ENCODE measurements at regions of chr9 and their contacts with region 1.

Region 1: GRCh38 chr9:101533334-101534107 is at the start of gene RNF20:
- DNase-seq: peak; percentile 96 to 98
- H3K4me3 ChIP-seq: peak within 1 kb of the TSS; percentile 63
- H3K27ac ChIP-seq: peak within 1 kb of the TSS; percentile 65
- H3K4me1 ChIP-seq: peaks cover 9% of the 10 kb centered on the region
- H3K27me3 ChIP-seq: no peaks in the 10 kb centered on the region
- CTCF ChIP-seq: no peak
- total RNA-seq, gene RNF20: 55.8 and 58.7 TPM in 2 replicates

Region 2: GRCh38 chr9:101449140-101449721 is 84.3 kb before region 1 on chr9:
- CTCF ChIA-PET with region 1: interaction called, 5 read pairs
- POLR2A ChIA-PET with region 1: interaction called, 6 read pairs
- intact Hi-C with region 1: loop called (anchors 2 kb)
- DNase-seq: peak; percentile 66 to 67
- H3K4me3 ChIP-seq: peak overlapping the region; percentile 64
- H3K27ac ChIP-seq: no peak overlapping the region
- H3K4me1 ChIP-seq: no peaks in the 10 kb centered on the region
- H3K27me3 ChIP-seq: peaks cover 12% of the 10 kb centered on the region; the same call in 1 of the 2 replicates
- CTCF ChIP-seq: peak; percentile 71

Region 3: DNA sequence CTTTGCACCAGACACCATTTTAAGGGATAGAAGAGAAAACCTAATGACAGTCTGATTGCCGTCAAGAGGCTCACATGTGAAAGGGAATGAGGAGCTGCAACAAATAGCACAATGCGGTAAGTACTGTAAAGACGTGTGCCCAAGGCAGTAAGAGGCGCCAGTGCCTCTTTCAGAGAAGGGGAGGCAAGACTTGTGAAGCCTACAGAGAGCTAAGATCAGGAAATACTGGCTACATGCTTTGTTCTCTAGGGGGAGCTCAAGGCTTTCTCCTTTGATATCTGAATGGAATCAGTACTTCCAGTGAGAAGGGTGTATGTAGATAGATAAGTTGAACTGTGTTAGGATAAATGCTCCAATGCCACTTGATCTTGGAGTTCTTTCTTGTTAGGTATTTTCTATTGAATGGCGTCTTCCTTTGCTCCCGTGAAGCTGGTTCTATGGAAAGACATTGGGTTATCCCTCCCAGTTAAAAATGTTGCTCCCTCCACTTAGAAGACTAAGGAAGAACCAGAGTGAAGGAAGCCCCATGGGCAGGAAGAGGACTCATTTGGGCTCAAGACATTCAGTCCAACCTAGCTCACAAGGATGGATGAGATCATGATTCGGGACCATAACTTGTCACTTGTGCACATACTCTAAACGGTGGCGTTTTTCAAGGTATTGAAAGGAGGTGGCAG is 74.4 kb before region 1 on chr9:
- CTCF ChIA-PET with region 1: interaction called, 9 read pairs
- POLR2A ChIA-PET with region 1: no interaction called
- intact Hi-C with region 1: loop called (anchors 1 kb)
- DNase-seq: peak; percentile 12 to 60
- H3K4me3 ChIP-seq: no peak overlapping the region
- H3K27ac ChIP-seq: no peak overlapping the region
- H3K4me1 ChIP-seq: peaks cover 8% of the 10 kb centered on the region
- H3K27me3 ChIP-seq: no peaks in the 10 kb centered on the region
- CTCF ChIP-seq: peak; percentile 73